ENCODE measurements at regions of chr5 and their contacts with region 1.

Region 1: DNA sequence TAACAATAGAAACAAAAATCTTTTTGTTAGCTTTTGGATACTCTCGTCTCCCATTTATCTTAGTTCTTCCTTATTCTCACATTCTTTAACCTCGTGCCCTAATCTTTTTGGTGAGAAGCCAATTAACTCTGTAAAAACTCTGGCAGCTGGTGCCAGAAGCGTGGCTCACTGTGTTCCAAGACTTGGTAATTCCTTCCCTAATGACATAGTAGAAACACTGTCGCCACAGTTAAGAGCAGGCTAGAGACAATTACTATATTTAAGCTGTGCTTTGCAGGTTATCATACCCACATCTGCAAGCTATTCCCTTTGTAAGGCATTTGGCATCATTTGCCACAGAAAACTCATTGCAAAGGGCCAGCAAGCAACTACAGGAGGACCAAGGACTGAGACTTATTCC is 160.9 kb upstream of the PIK3R1 start:
- DNase-seq: no peak
- ATAC-seq: no peak
- H3K4me3 ChIP-seq: no peak overlapping the region
- H3K27ac ChIP-seq: no peak overlapping the region
- H3K4me1 ChIP-seq: no peaks in the 10 kb centered on the region
- H3K27me3 ChIP-seq: no peaks in the 10 kb centered on the region
- CTCF ChIP-seq: no peak
- POLR2A ChIP-seq: no peak
- RAD21 ChIP-seq: no peak

Region 2: GRCh38 chr5:67375608-67376007 is 679.0 kb before region 1 on chr5:
- CTCF ChIA-PET with region 1: interaction called, 11 read pairs
- POLR2A ChIA-PET with region 1: no interaction called
- dilution Hi-C with region 1: no loop called
- in situ Hi-C with region 1: no loop called
- intact Hi-C with region 1: no loop called
- DNase-seq: no peak
- ATAC-seq: no peak
- H3K4me3 ChIP-seq: no peak overlapping the region
- H3K27ac ChIP-seq: no peak overlapping the region
- H3K4me1 ChIP-seq: no peaks in the 10 kb centered on the region
- H3K27me3 ChIP-seq: no peaks in the 10 kb centered on the region; the same call in 1 of the 2 replicates
- CTCF ChIP-seq: no peak
- POLR2A ChIP-seq: no peak
- RAD21 ChIP-seq: no peak

Region 3: GRCh38 chr5:68041293-68041692 is 13.3 kb before region 1 on chr5:
- CTCF ChIA-PET with region 1: no interaction called
- POLR2A ChIA-PET with region 1: no interaction called
- dilution Hi-C with region 1: no loop called
- in situ Hi-C with region 1: no loop called
- intact Hi-C with region 1: no loop called
- DNase-seq: no peak
- ATAC-seq: no peak
- H3K4me3 ChIP-seq: no peak overlapping the region
- H3K27ac ChIP-seq: no peak overlapping the region
- H3K4me1 ChIP-seq: peaks cover 2% of the 10 kb centered on the region; the same call in 1 of the 2 replicates
- H3K27me3 ChIP-seq: no peaks in the 10 kb centered on the region
- CTCF ChIP-seq: no peak
- POLR2A ChIP-seq: no peak
- RAD21 ChIP-seq: no peak

Region 4: DNA sequence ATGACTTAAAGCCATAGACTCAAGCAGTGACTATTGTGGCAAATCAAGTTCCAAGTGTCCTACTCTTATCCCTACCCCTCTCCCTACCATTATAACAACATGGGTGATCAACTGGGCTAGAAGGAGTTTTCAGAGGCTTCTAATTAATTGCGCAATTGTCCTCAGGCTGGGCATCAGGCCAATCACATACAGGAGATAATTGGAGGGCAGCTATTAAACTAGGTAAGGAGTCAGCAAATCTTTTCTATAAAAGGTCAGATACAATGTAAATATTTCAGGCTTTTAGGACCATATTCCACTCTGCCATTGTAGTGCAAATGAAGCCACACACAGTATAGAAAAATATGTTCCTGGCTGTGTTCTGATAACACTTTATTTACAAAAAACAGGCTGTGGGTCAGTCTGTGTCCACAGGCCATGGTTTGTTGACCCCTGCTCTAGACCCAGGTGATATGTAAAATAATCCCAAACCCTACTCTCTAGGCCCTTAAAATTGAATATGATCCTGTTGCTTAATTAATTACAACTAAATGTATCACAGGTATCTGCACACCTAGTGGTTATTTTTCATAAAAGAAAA is 19.5 kb after region 1 on chr5:
- CTCF ChIA-PET with region 1: no interaction called
- POLR2A ChIA-PET with region 1: interaction called, 20 read pairs
- dilution Hi-C with region 1: no loop called
- in situ Hi-C with region 1: no loop called
- intact Hi-C with region 1: no loop called
- DNase-seq: no peak
- ATAC-seq: no peak
- H3K4me3 ChIP-seq: no peak overlapping the region
- H3K27ac ChIP-seq: no peak overlapping the region
- H3K4me1 ChIP-seq: no peaks in the 10 kb centered on the region
- H3K27me3 ChIP-seq: no peaks in the 10 kb centered on the region; the same call in 1 of the 2 replicates
- CTCF ChIP-seq: no peak
- POLR2A ChIP-seq: no peak
- RAD21 ChIP-seq: no peak

Region 5: GRCh38 chr5:69113851-69114250 is 1059.2 kb after region 1 on chr5:
- CTCF ChIA-PET with region 1: no interaction called
- POLR2A ChIA-PET with region 1: no interaction called
- dilution Hi-C with region 1: no loop called
- in situ Hi-C with region 1: no loop called
- intact Hi-C with region 1: no loop called
- DNase-seq: no peak
- ATAC-seq: no peak
- H3K4me3 ChIP-seq: no peak overlapping the region
- H3K27ac ChIP-seq: no peak overlapping the region
- H3K4me1 ChIP-seq: no peaks in the 10 kb centered on the region
- H3K27me3 ChIP-seq: no peaks in the 10 kb centered on the region
- CTCF ChIP-seq: no peak
- POLR2A ChIP-seq: no peak
- RAD21 ChIP-seq: no peak